ENCODE measurements at regions of chr12 and their contacts with region 1.

Region 1: GRCh38 chr12:69900720-69901131 is 75.7 kb downstream of the MYRFL start:
- DNase-seq: peak; percentile 74
- ATAC-seq: no peak
- H3K4me3 Mint-ChIP-seq: no peak overlapping the region
- H3K27ac Mint-ChIP-seq: no peak overlapping the region
- H3K4me1 Mint-ChIP-seq: peaks cover 4% of the 10 kb centered on the region
- H3K27me3 Mint-ChIP-seq: peaks cover 9% of the 10 kb centered on the region

Region 2: GRCh38 chr12:69879041-69879960 is 21.4 kb before region 1 on chr12:
- CTCF ChIA-PET with region 1: interaction called, 14 read pairs
- DNase-seq: peak; percentile 74
- ATAC-seq: peak; percentile 95
- H3K4me3 Mint-ChIP-seq: no peak overlapping the region
- H3K27ac Mint-ChIP-seq: no peak overlapping the region
- H3K4me1 Mint-ChIP-seq: peaks cover 6% of the 10 kb centered on the region
- H3K27me3 Mint-ChIP-seq: peaks cover 23% of the 10 kb centered on the region

Region 3: DNA sequence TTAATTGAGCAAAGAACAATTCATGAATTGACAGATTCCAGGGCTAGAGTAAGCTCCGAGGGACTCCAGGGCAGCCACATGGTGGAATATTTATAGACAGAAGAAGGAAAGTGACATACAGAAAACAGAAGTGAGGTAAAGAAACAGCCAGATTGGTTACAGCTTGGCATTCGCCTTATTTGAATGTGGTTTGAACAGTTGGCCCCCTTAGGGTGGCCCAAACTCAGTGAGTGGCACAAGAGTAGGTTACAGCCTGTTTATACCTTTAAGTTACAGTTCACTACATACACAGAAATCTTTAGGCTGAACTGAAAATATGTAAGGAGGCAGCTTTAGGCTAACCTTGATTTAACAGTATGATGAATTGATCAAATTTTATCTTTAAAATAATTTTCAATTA is 168.0 kb after region 1 on chr12:
- CTCF ChIA-PET with region 1: no interaction called
- DNase-seq: no peak
- ATAC-seq: no peak
- H3K4me3 Mint-ChIP-seq: no peak overlapping the region
- H3K27ac Mint-ChIP-seq: no peak overlapping the region
- H3K4me1 Mint-ChIP-seq: no peaks in the 10 kb centered on the region
- H3K27me3 Mint-ChIP-seq: peaks cover 9% of the 10 kb centered on the region